Endothelial cell of umbilical vein (primary cell): ENCODE measurements at regions of chr1 and their contacts with region 1.

Region 1: GRCh38 chr1:230978491-230979388 is at the starts of genes ARV1 and TTC13:
- DNase-seq: peak; percentile 99
- H3K4me3 ChIP-seq: peak within 1 kb of the TSS; percentile 72 to 96 (median 86)
- H3K27ac ChIP-seq: peak within 1 kb of the TSS; percentile 42
- H3K4me1 ChIP-seq: peaks cover 19% of the 10 kb centered on the region
- H3K27me3 ChIP-seq: no peaks in the 10 kb centered on the region
- CTCF ChIP-seq: peak; percentile 5 to 29
- POLR2A ChIP-seq: peak; percentile 88
- total RNA-seq, gene ARV1: 10.7 and 12.5 TPM in 2 replicates
- total RNA-seq, gene TTC13: 22.2 and 23.9 TPM in 2 replicates

Region 2: DNA sequence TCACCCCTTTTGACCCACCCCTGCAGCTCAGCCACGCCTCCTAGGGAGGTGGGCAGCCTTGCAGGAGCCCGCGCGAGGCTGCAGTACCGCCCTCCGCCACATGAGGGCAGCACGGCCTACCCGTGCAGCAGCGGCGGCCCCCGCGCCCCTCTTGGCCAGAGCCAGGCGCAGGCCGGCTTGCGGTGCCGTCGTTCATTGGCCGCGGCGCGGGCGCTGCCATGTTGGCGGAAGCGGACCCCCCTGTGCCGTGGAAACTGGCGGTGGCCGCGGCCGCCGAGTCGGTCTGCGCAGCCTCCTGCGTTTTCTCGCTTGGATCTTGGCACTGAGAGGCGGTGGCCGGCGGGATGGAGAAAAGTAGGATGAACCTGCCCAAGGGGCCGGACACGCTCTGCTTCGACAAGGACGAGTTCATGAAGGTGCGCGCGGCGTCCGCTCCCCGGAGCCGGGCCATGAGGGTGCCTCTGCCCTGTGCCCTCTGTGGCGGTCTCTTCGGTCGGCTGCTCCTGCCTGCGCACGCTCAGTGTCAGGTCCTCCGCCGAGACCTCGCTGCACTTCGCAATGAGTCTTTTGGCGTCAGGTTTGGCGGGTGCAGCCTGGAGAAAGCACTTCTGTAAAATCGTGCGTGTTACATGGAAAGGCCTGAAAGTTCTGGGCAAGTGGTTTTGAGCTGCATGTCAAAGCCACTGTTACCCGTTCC is 336.3 kb before region 1 on chr1 and contains the start of gene COG2:
- CTCF ChIA-PET with region 1: interaction called, 5 read pairs
- POLR2A ChIA-PET with region 1: no interaction called
- dilution Hi-C with region 1: no loop called
- intact Hi-C with region 1: loop called (anchors 1 kb)
- DNase-seq: peak; percentile 94
- H3K4me3 ChIP-seq: peak within 1 kb of the TSS; percentile 4 to 95 (median 47)
- H3K27ac ChIP-seq: no peak within 1 kb of the TSS
- H3K4me1 ChIP-seq: peaks cover 12% of the 10 kb centered on the region
- H3K27me3 ChIP-seq: peaks cover 6 to 8% of the 10 kb centered on the region in 2 experiments
- CTCF ChIP-seq: peak; percentile 100
- POLR2A ChIP-seq: peak; percentile 65
- total RNA-seq, gene COG2: 20.7 and 24.2 TPM in 2 replicates

Region 3: DNA sequence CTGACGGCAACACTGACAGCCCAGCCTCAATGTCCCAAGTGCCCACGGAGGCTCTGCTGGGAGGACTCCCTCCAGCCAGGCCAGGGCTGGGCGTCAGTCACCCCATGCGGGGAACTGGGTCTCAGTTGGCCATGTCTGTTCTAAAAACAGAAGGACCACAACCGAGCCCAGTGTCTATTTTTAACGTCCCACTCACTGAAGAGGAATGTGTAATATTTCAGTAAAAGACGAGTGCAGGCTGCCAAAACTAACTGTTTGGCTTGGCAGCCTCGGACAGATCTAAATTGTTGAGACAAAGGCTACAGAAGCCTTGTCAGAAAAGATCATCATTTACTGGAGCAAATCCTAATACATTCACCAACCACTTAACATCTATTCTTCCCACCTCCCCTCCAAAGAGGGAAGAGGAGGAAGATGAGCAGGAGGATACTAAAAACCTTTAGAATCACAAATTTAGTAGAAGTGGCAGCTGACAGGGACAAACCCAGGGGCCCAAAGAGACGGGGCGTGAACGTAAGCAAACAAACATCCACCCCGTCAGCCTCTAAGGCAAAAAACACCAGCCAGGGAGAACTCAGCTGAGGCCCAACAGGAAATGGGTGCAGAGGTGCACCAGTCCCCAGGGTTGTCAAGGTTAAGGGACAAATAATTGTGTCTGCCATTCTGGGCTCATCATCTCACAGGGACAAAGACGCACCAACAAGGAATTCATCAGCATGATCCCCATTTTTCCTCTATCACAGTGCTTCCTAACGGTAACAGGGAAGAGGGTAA is 129.1 kb before region 1 on chr1:
- CTCF ChIA-PET with region 1: no interaction called
- POLR2A ChIA-PET with region 1: no interaction called
- dilution Hi-C with region 1: no loop called
- intact Hi-C with region 1: loop called (anchors 2 kb)
- DNase-seq: peak; percentile 93
- H3K4me3 ChIP-seq: no peak overlapping the region
- H3K27ac ChIP-seq: peak overlapping the region; percentile 78
- H3K4me1 ChIP-seq: peaks cover 22% of the 10 kb centered on the region
- H3K27me3 ChIP-seq: no peaks in the 10 kb centered on the region
- CTCF ChIP-seq: no peak
- POLR2A ChIP-seq: no peak

Region 4: GRCh38 chr1:231028682-231029081 is 49.9 kb after region 1 on chr1:
- CTCF ChIA-PET with region 1: interaction called, 4 read pairs
- POLR2A ChIA-PET with region 1: no interaction called
- dilution Hi-C with region 1: no loop called
- intact Hi-C with region 1: loop called (anchors 1 kb)
- DNase-seq: peak; percentile 89
- H3K4me3 ChIP-seq: no peak overlapping the region
- H3K27ac ChIP-seq: peak overlapping the region; percentile 45
- H3K4me1 ChIP-seq: peaks cover 16% of the 10 kb centered on the region
- H3K27me3 ChIP-seq: no peaks in the 10 kb centered on the region
- CTCF ChIP-seq: no peak
- POLR2A ChIP-seq: no peak

Region 5: DNA sequence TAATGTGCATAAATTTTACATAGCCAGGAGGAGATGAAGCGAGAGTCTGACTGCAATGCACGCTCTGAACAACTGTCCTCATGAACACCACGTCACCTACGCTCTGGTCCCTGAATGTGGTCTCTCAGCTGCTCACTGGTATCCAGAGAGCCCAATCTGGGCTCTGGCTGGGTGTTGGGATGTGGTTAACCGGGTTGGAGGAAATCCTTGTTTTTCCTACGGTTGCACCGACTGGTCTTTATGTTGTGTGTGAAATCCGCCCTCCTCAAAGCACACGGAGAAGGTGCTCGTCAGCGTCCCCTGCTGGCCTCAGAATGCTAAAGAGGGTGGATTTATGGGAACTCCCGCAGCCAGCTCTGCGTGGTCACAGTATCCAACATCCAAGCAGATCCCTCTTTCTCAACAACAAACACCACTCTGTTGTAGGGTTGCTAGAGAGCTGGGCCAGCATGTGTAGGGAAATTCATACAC is 113.1 kb after region 1 on chr1:
- CTCF ChIA-PET with region 1: interaction called, 11 read pairs
- POLR2A ChIA-PET with region 1: no interaction called
- dilution Hi-C with region 1: no loop called
- intact Hi-C with region 1: loop called (anchors 2 kb)
- DNase-seq: peak; percentile 61
- H3K4me3 ChIP-seq: no peak overlapping the region
- H3K27ac ChIP-seq: no peak overlapping the region
- H3K4me1 ChIP-seq: no peaks in the 10 kb centered on the region
- H3K27me3 ChIP-seq: peaks cover 7 to 13% of the 10 kb centered on the region in 2 experiments
- CTCF ChIP-seq: peak; percentile 71 to 73
- POLR2A ChIP-seq: no peak

Region 6: GRCh38 chr1:231260351-231260750 is 281.6 kb after region 1 on chr1:
- CTCF ChIA-PET with region 1: no interaction called
- POLR2A ChIA-PET with region 1: no interaction called
- dilution Hi-C with region 1: no loop called
- intact Hi-C with region 1: no loop called
- DNase-seq: peak; percentile 15
- H3K4me3 ChIP-seq: no peak overlapping the region
- H3K27ac ChIP-seq: no peak overlapping the region
- H3K4me1 ChIP-seq: peaks cover 7% of the 10 kb centered on the region
- H3K27me3 ChIP-seq: no peaks in the 10 kb centered on the region
- CTCF ChIP-seq: no peak
- POLR2A ChIP-seq: no peak

Region 7: GRCh38 chr1:231272880-231273279 is 294.1 kb after region 1 on chr1:
- CTCF ChIA-PET with region 1: no interaction called
- POLR2A ChIA-PET with region 1: no interaction called
- dilution Hi-C with region 1: no loop called
- intact Hi-C with region 1: loop called (anchors 2 kb)
- DNase-seq: peak; percentile 85
- H3K4me3 ChIP-seq: no peak overlapping the region
- H3K27ac ChIP-seq: peak overlapping the region; percentile 74
- H3K4me1 ChIP-seq: peaks cover 21% of the 10 kb centered on the region
- H3K27me3 ChIP-seq: no peaks in the 10 kb centered on the region
- CTCF ChIP-seq: no peak
- POLR2A ChIP-seq: no peak

Region 8: GRCh38 chr1:231603598-231604275 is 625.0 kb after region 1 on chr1:
- CTCF ChIA-PET with region 1: no interaction called
- POLR2A ChIA-PET with region 1: no interaction called
- dilution Hi-C with region 1: no loop called
- intact Hi-C with region 1: loop called (anchors 10 kb)
- DNase-seq: peak; percentile 74
- H3K4me3 ChIP-seq: peak overlapping the region in 2 of 3 experiments; percentile 15 to 47
- H3K27ac ChIP-seq: no peak overlapping the region
- H3K4me1 ChIP-seq: peaks cover 8% of the 10 kb centered on the region
- H3K27me3 ChIP-seq: peaks cover 2 to 4% of the 10 kb centered on the region in 2 experiments
- CTCF ChIP-seq: peak; percentile 61 to 65
- POLR2A ChIP-seq: no peak